ENCODE measurements at regions of chr15 and their contacts with region 1.

Region 1: DNA sequence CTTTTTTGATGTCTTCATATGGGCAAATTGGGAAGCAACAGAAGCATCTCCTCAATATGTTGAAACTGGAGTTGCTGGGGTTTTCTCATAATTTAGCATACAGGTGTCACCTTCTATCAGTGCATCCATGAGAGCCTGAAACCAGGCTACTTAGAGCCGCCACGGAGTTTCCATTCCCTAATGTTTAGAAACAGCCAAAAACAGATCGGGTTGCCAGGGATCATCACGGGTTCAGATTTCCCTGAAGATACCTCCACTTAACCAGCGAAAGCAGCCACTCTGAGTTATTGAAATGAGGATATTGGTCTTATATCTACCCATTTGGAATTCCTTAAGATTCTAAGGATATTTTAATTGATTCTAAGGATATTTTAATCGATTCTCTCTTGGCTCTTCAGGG is 14.5 kb downstream of the TERB2 start:
- DNase-seq: no peak
- H3K4me3 ChIP-seq: no peak overlapping the region
- H3K27ac ChIP-seq: no peak overlapping the region
- H3K4me1 ChIP-seq: no peaks in the 10 kb centered on the region
- H3K27me3 ChIP-seq: no peaks in the 10 kb centered on the region
- CTCF ChIP-seq: no peak

Region 2: DNA sequence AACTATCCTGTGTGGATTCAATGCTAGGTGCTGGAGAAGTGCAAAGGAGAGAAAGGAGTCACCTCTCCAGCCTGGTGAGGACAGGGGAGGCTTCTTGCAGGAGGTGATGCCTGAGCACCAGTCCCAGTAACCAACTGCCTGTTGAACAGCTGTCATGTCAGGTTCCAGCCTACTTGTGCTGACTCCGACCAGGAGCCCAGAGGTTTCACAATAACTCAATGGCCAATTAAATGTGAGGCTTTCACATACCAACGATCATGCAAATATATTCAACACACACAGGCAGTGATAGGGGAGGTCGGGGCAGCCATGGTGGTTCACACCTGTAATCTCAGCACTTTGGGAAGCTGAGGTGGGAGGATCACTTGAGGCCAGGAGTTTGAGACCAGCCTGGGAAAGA is 59.7 kb after region 1 on chr15:
- intact Hi-C with region 1: loop called (anchors 10 kb)
- DNase-seq: no peak
- H3K4me3 ChIP-seq: no peak overlapping the region
- H3K27ac ChIP-seq: no peak overlapping the region
- H3K4me1 ChIP-seq: no peaks in the 10 kb centered on the region
- H3K27me3 ChIP-seq: no peaks in the 10 kb centered on the region
- CTCF ChIP-seq: no peak

Region 3: DNA sequence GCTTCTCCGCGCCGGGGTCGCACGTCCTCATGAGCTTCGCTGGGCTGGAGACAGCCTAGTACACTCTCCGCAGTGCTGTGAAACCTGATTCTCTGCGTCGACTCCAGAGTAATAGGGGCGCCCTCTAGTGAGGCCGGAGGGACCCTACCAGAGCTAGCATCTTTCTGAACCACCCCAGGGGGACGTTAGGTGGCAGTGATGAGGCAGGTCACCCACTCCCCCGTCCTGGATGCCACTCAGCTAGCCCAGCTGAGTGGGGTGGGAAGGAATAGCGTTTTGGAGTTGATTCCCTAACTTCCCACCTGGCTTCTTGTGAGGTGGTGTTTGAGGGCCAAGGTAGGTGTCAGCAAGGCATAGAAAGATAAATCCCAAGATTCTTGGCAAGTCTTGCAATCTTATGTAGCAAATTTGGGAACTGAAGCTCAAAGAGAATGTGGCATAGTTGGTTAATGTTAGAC is 147.1 kb after region 1 on chr15:
- intact Hi-C with region 1: loop called (anchors 5 kb)
- DNase-seq: peak; percentile 92
- H3K4me3 ChIP-seq: no peak overlapping the region
- H3K27ac ChIP-seq: no peak overlapping the region
- H3K4me1 ChIP-seq: peaks cover 3% of the 10 kb centered on the region
- H3K27me3 ChIP-seq: peaks cover 40% of the 10 kb centered on the region
- CTCF ChIP-seq: peak; percentile 97